ENCODE measurements at regions of chr4 and their contacts with region 1.

Region 1: DNA sequence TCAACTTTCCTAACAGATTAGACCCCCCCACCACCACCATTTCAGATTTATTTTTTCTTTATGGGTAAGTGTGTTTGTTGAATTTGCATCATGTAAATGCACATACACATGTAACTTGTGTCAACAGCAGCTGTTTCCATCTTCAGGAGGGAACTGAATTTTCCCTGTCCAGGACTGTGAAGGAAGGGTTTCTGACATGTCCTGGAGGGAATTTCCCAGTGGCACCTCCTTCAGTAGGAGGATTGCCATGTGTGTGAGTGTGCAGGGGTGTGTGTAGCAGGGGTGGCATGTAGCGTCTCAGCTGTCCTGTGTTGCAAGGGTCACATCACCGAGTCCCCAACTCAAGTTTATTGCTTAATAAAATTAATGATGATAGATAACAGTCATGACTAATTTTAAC is 19.7 kb downstream of the HERC6 start:
- DNase-seq: no peak
- H3K4me3 ChIP-seq: no peak overlapping the region
- H3K27ac ChIP-seq: no peak overlapping the region
- H3K4me1 ChIP-seq: no peaks in the 10 kb centered on the region
- H3K27me3 ChIP-seq: no peaks in the 10 kb centered on the region
- CTCF ChIP-seq: no peak

Region 2: DNA sequence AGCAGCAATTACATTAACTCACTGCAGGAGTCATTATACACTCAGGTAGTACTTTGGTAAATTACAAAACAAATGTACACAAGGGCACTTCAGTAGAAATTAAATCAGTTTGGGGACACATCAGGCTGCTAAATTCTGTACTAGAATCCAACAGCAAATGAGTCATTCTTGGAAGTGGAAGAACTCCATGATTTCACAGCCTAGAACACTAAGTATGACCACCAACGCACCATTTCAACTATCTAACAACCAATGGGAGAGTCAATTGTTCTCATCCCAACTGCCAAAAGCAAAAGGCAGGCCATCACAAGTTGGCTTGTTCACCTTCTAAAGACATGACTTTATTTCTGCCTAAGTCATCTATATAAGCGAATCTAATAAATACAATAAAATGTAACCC is 140.7 kb before region 1 on chr4:
- CTCF ChIA-PET with region 1: no interaction called
- POLR2A ChIA-PET with region 1: no interaction called
- intact Hi-C with region 1: no loop called
- DNase-seq: no peak
- H3K4me3 ChIP-seq: no peak overlapping the region
- H3K27ac ChIP-seq: no peak overlapping the region
- H3K4me1 ChIP-seq: no peaks in the 10 kb centered on the region
- H3K27me3 ChIP-seq: no peaks in the 10 kb centered on the region
- CTCF ChIP-seq: no peak

Region 3: DNA sequence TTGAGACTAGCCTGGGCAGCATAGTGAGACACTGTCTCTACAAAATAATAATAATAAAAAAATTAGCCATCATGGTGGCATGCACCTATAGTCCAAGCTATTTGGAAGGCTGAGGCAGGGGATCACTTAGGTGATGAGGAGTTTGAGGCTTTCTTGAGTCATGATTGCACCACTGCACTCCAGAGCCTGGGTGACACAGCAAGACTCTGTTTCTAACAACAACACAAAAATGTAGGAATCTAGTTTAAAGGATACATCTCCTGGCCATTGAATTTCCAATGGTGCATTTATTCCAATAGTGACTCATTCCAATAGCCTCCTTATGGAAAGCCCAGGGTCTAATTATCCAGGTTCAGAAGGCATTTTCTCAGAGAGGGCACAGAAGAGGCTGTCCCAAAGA is 41.6 kb before region 1 on chr4:
- CTCF ChIA-PET with region 1: no interaction called
- POLR2A ChIA-PET with region 1: interaction called, 11 read pairs
- intact Hi-C with region 1: no loop called
- DNase-seq: no peak
- H3K4me3 ChIP-seq: no peak overlapping the region
- H3K27ac ChIP-seq: no peak overlapping the region
- H3K4me1 ChIP-seq: no peaks in the 10 kb centered on the region
- H3K27me3 ChIP-seq: no peaks in the 10 kb centered on the region
- CTCF ChIP-seq: no peak

Region 4: DNA sequence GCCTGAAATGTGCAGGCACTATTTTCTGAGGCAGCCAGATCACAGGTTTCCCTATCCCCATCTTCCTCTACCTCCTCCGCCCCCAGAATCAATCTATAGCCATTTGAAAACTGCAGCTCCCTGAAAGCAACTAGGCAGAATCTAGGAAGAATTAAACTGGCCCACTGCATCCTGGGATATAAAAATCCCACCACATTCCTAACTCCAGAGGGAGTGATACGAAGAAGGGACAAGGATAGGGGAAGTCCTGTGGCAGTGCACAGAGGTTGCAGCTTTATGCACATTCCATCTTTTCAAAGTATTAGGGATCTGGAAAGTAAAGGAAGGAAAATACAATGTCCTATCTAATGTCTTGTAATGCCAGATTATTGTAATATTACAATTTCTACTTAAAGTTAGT is 175.6 kb after region 1 on chr4:
- CTCF ChIA-PET with region 1: no interaction called
- POLR2A ChIA-PET with region 1: no interaction called
- intact Hi-C with region 1: no loop called
- DNase-seq: peak; percentile 2
- H3K4me3 ChIP-seq: no peak overlapping the region
- H3K27ac ChIP-seq: no peak overlapping the region
- H3K4me1 ChIP-seq: no peaks in the 10 kb centered on the region
- H3K27me3 ChIP-seq: no peaks in the 10 kb centered on the region
- CTCF ChIP-seq: no peak

Region 5: GRCh38 chr4:88600176-88600838 is 201.9 kb after region 1 on chr4:
- CTCF ChIA-PET with region 1: no interaction called
- POLR2A ChIA-PET with region 1: no interaction called
- intact Hi-C with region 1: no loop called
- DNase-seq: peak; percentile 18
- H3K4me3 ChIP-seq: no peak overlapping the region
- H3K27ac ChIP-seq: no peak overlapping the region
- H3K4me1 ChIP-seq: peaks cover 15% of the 10 kb centered on the region
- H3K27me3 ChIP-seq: no peaks in the 10 kb centered on the region
- CTCF ChIP-seq: no peak

Measured in A673 (cell line).